ENCODE measurements at regions of chr7 and their contacts with region 1.

Region 1: GRCh38 chr7:129218514-129219062 is 6.2 kb upstream of the AHCYL2 start:
- DNase-seq: peak; percentile 59 to 82
- H3K4me3 ChIP-seq: no peak overlapping the region
- H3K27ac ChIP-seq: no peak overlapping the region
- H3K4me1 ChIP-seq: peaks cover 4% of the 10 kb centered on the region
- H3K27me3 ChIP-seq: no peaks in the 10 kb centered on the region
- CTCF ChIP-seq: peak; percentile 93

Region 2: DNA sequence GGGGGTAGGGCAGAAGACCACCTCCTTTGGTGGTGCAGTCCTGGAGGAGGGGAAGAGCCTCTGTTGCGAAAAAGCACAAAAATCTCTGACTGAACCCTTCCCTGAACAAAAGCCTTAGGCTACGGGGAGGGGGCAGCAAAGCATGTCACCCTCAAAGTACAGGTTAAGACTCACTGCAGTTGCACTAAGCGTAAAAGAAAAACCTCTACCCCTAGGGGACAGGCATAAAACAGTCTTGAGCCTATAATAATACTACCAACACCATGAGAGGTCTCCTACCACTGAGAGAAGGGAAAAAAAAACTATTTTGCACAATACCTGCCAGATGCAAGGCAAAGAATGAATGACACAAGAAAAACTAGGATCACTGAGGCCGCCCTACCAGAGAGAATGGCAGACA is 181.0 kb before region 1 on chr7:
- CTCF ChIA-PET with region 1: no interaction called
- POLR2A ChIA-PET with region 1: no interaction called
- intact Hi-C with region 1: no loop called
- DNase-seq: no peak
- H3K4me3 ChIP-seq: no peak overlapping the region
- H3K27ac ChIP-seq: no peak overlapping the region
- H3K4me1 ChIP-seq: no peaks in the 10 kb centered on the region
- H3K27me3 ChIP-seq: no peaks in the 10 kb centered on the region
- CTCF ChIP-seq: no peak

Region 3: DNA sequence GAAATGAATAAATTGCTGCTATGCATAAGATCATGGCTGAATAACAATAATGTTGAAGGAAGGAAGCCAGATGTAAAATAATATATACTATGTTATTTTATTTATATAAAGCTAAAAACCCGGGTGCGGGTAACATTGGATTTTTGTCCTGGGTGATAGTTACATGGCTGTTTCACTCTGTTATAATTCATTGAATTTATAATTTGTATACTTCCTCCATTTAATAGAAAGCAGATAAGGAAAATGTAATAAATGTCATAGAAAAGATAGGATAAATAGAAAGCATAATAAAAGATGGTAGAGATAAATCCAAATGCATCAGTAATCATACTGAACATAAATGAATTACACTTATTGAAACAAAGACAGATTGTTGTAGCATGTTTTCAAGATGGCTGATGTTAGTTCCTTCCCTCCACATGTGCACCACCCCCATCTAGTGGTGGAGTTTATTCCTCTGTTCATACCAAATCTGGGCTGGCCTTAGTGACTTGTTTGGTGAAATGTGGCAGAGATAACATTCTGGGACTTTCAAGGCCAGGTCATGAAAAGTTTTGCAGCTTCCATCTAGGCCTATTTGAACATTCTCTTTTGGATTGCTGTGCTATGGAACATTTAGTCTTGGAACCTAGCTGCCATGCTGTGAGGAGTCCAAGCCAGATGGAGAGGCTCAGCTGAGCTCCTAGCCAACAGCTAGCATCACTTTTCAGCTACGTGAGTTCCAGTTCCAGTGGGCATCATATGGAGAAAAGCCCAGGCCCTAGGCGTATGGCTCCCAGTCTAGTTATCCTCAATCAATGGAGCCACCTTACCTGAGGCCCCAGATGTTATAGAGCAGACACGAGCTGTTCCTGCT is 53.1 kb after region 1 on chr7:
- CTCF ChIA-PET with region 1: interaction called, 6 read pairs
- POLR2A ChIA-PET with region 1: no interaction called
- intact Hi-C with region 1: loop called (anchors 1 kb)
- DNase-seq: peak; percentile 34 to 47
- H3K4me3 ChIP-seq: no peak overlapping the region
- H3K27ac ChIP-seq: no peak overlapping the region
- H3K4me1 ChIP-seq: peaks cover 2% of the 10 kb centered on the region; the same call in 1 of the 2 replicates
- H3K27me3 ChIP-seq: no peaks in the 10 kb centered on the region
- CTCF ChIP-seq: peak; percentile 70

Region 4: DNA sequence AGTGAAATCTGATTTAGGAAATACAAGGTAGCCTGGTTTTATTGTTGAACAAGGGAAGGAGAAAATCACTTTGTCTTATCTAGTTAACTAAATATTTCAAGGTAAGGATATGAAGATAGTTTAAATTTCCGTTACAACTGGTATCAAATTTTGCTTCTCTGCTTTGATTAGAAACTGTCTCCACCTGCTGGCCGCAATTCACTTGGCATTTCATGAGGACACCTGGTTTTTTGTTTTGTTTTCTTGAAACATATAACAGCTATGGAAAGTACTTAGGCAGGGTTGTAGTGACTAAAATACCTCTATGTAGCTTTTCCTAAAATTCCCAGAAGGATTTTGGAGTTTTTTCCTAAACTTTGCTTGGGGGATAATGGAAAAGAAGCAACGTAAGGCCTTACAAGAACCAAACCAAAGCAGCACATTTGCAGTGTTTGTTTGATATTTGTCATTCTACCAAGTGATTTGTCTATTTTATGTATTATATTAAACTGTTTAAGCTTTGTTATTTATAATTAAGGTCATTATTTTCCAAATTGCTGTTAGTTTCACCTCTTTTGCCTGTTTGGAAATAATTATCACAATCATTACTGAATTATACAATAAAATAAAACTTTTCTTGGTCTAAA is 79.8 kb after region 1 on chr7:
- CTCF ChIA-PET with region 1: interaction called, 12 read pairs
- POLR2A ChIA-PET with region 1: no interaction called
- intact Hi-C with region 1: loop called (anchors 1 kb)
- DNase-seq: peak in 1 of 2 experiments; percentile 50
- H3K4me3 ChIP-seq: no peak overlapping the region
- H3K27ac ChIP-seq: no peak overlapping the region
- H3K4me1 ChIP-seq: peaks cover 18% of the 10 kb centered on the region
- H3K27me3 ChIP-seq: no peaks in the 10 kb centered on the region
- CTCF ChIP-seq: peak; percentile 82

Region 5: GRCh38 chr7:129343099-129343700 is 124.6 kb after region 1 on chr7:
- CTCF ChIA-PET with region 1: interaction called, 14 read pairs
- POLR2A ChIA-PET with region 1: no interaction called
- intact Hi-C with region 1: loop called (anchors 5 kb)
- DNase-seq: peak; percentile 9 to 52
- H3K4me3 ChIP-seq: no peak overlapping the region
- H3K27ac ChIP-seq: no peak overlapping the region
- H3K4me1 ChIP-seq: peaks cover 8% of the 10 kb centered on the region
- H3K27me3 ChIP-seq: no peaks in the 10 kb centered on the region
- CTCF ChIP-seq: peak; percentile 85

Region 6: GRCh38 chr7:129644634-129645230 is 426.1 kb after region 1 on chr7:
- CTCF ChIA-PET with region 1: interaction called, 6 read pairs
- POLR2A ChIA-PET with region 1: no interaction called
- intact Hi-C with region 1: loop called (anchors 1 kb)
- DNase-seq: peak in 1 of 2 experiments; percentile 49
- H3K4me3 ChIP-seq: no peak overlapping the region
- H3K27ac ChIP-seq: no peak overlapping the region
- H3K4me1 ChIP-seq: peaks cover 23% of the 10 kb centered on the region
- H3K27me3 ChIP-seq: no peaks in the 10 kb centered on the region
- CTCF ChIP-seq: peak; percentile 76